B cell (primary cell): ENCODE measurements at regions of chr10 and their contacts with region 1.

Region 1: DNA sequence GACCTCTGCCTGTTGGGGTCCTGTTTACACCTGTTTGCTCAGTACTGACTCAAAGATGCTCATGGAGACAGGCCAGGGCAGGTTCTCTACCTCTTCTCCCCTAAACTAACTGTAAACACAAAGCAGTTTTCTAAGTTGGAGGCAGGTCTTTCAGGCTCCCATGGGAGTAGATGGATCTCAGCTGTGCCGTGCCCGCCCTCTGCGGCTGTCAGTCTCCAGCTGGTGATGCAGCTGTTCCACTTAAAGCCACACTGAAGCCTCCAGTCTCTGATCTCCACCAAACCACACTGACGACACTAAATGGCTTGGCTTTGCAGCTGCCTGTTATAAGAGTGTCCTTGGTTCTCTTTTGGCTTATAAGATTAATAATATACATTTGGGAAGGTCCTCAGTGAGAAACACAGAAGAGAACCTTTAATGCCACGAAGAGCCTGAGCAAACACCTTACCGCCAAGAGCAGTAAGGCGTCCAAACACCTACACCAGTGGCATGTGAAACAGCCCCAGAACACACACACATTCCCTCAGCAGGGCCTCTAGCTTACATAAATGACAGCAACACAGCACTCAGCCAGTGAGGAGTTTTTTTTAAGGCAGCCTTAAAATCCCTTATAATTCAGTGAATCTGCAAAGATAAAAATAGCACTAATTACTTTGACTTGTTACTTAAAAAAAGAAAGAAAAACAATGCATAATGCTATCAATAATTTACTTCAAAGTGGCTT is 60.4 kb upstream of the KCNIP2 start:
- DNase-seq: peak; percentile 85
- ATAC-seq: peak; percentile 87
- H3K4me3 ChIP-seq: no peak overlapping the region
- H3K4me3 Mint-ChIP-seq: peak overlapping the region; percentile 76
- H3K27ac ChIP-seq: peak overlapping the region; percentile 50 to 69
- H3K27ac Mint-ChIP-seq: peak overlapping the region; percentile 89
- H3K4me1 ChIP-seq: peaks cover 72 to 76% of the 10 kb centered on the region in 2 donors
- H3K4me1 Mint-ChIP-seq: peaks cover 74% of the 10 kb centered on the region
- H3K27me3 ChIP-seq: no peaks in the 10 kb centered on the region
- H3K27me3 Mint-ChIP-seq: no peaks in the 10 kb centered on the region
- CTCF ChIP-seq: no peak

Region 2: GRCh38 chr10:101671453-101671852 is 232.5 kb before region 1 on chr10:
- CTCF ChIA-PET with region 1: no interaction called
- POLR2A ChIA-PET with region 1: no interaction called
- intact Hi-C with region 1: no loop called
- DNase-seq: peak; percentile 17
- ATAC-seq: peak; percentile 31
- H3K4me3 ChIP-seq: no peak overlapping the region
- H3K4me3 Mint-ChIP-seq: no peak overlapping the region
- H3K27ac ChIP-seq: peak overlapping the region; percentile 38 to 42
- H3K27ac Mint-ChIP-seq: peak overlapping the region; percentile 57
- H3K4me1 ChIP-seq: peaks cover 9 to 15% of the 10 kb centered on the region in 2 donors
- H3K4me1 Mint-ChIP-seq: peaks cover 15% of the 10 kb centered on the region
- H3K27me3 ChIP-seq: no peaks in the 10 kb centered on the region
- H3K27me3 Mint-ChIP-seq: no peaks in the 10 kb centered on the region
- CTCF ChIP-seq: no peak

Region 3: DNA sequence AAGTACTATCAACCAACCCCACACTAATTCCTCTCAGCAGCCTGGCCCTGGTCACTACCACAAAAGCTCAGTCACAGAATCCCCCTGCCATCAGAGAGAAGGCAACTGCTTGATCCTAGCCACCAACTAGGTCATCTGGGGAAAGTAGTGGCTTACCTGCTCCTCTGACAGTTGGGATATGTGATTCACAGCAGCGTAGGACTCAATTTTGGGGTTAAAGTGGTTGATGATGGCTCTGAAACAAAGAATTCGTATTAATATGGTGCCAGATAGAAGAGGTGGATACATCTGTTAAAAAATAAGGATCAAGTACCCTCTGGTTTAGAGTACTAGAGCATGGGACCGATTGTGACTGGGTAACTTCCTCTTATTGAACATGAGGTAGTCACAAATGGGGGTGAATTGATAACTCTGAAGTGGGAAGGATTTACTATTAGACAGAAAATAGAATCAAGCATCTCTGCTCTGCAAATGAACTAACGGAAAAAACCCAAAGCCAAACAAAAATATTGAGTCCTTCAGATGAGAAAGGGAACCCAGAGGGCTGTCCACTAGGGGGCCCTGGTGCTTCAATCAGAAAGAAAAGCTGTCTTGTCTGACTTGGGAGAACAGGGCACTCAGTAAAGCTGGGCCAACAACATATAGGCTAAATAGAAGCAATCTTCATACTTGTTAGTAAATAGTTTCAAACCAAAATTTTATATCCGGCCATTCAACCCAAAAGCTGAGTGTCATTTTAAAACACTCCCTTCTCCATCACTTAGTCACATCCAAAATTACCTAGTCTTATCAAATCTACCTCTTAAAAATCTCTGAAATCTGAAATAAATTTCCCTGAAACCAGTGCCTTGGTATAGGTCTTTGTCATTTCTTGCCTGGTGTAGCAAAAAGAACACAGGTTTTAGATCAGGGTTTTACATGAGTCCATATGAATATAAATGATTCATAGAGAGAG is 14.5 kb before region 1 on chr10:
- CTCF ChIA-PET with region 1: interaction called, 78 read pairs
- POLR2A ChIA-PET with region 1: interaction called, 3 read pairs
- intact Hi-C with region 1: loop called (anchors 1 kb)
- DNase-seq: peak; percentile 83
- ATAC-seq: peak; percentile 79
- H3K4me3 ChIP-seq: peak overlapping the region in 1 of 5 experiments; percentile 18
- H3K4me3 Mint-ChIP-seq: peak overlapping the region; percentile 1
- H3K27ac ChIP-seq: peak overlapping the region; percentile 17 to 75
- H3K27ac Mint-ChIP-seq: peak overlapping the region; percentile 59
- H3K4me1 ChIP-seq: peaks cover 23 to 43% of the 10 kb centered on the region in 2 donors
- H3K4me1 Mint-ChIP-seq: peaks cover 48% of the 10 kb centered on the region
- H3K27me3 ChIP-seq: no peaks in the 10 kb centered on the region
- H3K27me3 Mint-ChIP-seq: no peaks in the 10 kb centered on the region
- CTCF ChIP-seq: peak; percentile 90

Region 4: DNA sequence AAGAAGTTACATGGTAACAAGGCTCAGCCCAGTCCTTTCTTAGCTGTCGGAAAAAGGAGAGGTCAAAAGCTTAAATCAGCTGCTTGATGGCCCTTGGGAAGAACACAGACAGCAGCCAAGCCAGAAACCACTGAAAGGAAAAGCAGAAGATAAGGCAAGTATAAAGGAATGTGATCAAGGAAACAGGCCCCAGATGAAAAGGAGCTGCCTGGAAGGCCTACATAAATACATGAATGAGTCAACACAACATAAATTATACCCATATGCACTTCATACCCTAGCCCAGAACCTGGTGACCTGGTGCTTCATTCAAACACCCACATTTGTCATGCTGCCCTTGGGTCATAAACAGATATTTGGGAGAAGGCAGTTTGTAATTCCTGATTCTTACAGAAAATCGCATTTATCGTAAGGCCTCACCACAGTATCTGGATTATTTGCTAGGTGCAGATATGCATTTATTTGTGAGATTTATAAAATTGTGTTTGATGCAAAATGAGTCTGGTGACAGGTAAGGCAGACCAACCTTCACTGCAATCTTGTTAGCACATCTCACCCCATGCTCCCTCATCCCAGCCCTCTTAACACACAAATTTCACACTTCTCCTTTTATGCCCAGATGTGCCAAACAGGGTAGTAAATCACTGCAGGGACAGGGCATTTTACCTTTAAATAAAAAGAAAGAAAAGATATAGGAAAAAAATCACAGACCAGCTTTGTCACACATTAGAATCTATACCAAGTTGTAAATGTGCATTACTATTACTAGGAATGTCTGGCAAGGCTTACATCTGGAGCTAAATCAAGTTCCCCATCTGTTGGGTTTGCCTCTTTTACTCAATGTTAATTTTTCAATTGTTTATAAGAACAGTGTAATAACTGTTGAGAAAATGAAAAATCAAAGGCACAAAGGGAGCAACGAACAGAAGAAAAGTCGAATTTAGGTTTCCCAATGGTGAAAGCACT is 34.6 kb after region 1 on chr10:
- CTCF ChIA-PET with region 1: no interaction called
- POLR2A ChIA-PET with region 1: no interaction called
- intact Hi-C with region 1: loop called (anchors 5 kb)
- DNase-seq: peak; percentile 43
- ATAC-seq: no peak
- H3K4me3 ChIP-seq: peak overlapping the region in 1 of 5 experiments; percentile 15
- H3K4me3 Mint-ChIP-seq: no peak overlapping the region
- H3K27ac ChIP-seq: peak overlapping the region in 1 of 2 donors; percentile 49
- H3K27ac Mint-ChIP-seq: no peak overlapping the region
- H3K4me1 ChIP-seq: peaks cover 23 to 31% of the 10 kb centered on the region in 2 donors
- H3K4me1 Mint-ChIP-seq: peaks cover 45% of the 10 kb centered on the region
- H3K27me3 ChIP-seq: no peaks in the 10 kb centered on the region
- H3K27me3 Mint-ChIP-seq: no peaks in the 10 kb centered on the region
- CTCF ChIP-seq: no peak

Region 5: GRCh38 chr10:101952191-101952590 is 48.2 kb after region 1 on chr10:
- CTCF ChIA-PET with region 1: no interaction called
- POLR2A ChIA-PET with region 1: no interaction called
- intact Hi-C with region 1: no loop called
- DNase-seq: no peak
- ATAC-seq: no peak
- H3K4me3 ChIP-seq: no peak overlapping the region
- H3K4me3 Mint-ChIP-seq: no peak overlapping the region
- H3K27ac ChIP-seq: peak overlapping the region in 1 of 2 donors; percentile 47
- H3K27ac Mint-ChIP-seq: no peak overlapping the region
- H3K4me1 ChIP-seq: peaks cover 0 to 3% of the 10 kb centered on the region in 2 donors
- H3K4me1 Mint-ChIP-seq: peaks cover 15% of the 10 kb centered on the region
- H3K27me3 ChIP-seq: no peaks in the 10 kb centered on the region
- H3K27me3 Mint-ChIP-seq: no peaks in the 10 kb centered on the region
- CTCF ChIP-seq: no peak

Region 6: GRCh38 chr10:101974091-101974971 is 70.3 kb after region 1 on chr10:
- CTCF ChIA-PET with region 1: interaction called, 9 read pairs
- POLR2A ChIA-PET with region 1: interaction called, 6 read pairs
- intact Hi-C with region 1: loop called (anchors 2 kb)
- DNase-seq: no peak
- ATAC-seq: no peak
- H3K4me3 ChIP-seq: peak overlapping the region in 1 of 5 experiments; percentile 56
- H3K4me3 Mint-ChIP-seq: peak overlapping the region; percentile 90
- H3K27ac ChIP-seq: peak overlapping the region; percentile 77 to 80
- H3K27ac Mint-ChIP-seq: peak overlapping the region; percentile 97
- H3K4me1 ChIP-seq: peaks cover 54 to 58% of the 10 kb centered on the region in 2 donors
- H3K4me1 Mint-ChIP-seq: peaks cover 60% of the 10 kb centered on the region
- H3K27me3 ChIP-seq: no peaks in the 10 kb centered on the region
- H3K27me3 Mint-ChIP-seq: no peaks in the 10 kb centered on the region
- CTCF ChIP-seq: no peak

Region 7: DNA sequence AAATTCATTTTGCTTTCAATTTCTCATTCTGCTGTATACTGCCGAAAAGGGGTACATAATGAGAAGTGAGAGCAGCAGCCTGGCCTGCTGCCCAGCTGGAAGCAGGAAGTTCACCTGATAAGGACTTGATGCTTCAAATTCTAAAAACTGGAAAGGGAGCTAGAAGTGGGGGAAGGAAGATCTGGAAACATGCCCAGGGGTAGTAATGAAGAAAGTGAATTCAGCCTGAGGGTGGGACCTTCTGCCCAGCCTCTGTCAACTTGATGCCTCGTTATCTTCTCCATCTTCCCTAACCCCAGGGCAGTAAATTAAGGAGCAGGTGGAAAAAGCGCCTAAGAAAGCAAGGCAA is 82.6 kb after region 1 on chr10:
- CTCF ChIA-PET with region 1: interaction called, 7 read pairs
- POLR2A ChIA-PET with region 1: no interaction called
- intact Hi-C with region 1: loop called (anchors 5 kb)
- DNase-seq: peak; percentile 71
- ATAC-seq: peak; percentile 85
- H3K4me3 ChIP-seq: peak overlapping the region in 3 of 5 experiments; percentile 11 to 39 (median 30)
- H3K4me3 Mint-ChIP-seq: peak overlapping the region; percentile 77
- H3K27ac ChIP-seq: peak overlapping the region; percentile 86 to 87
- H3K27ac Mint-ChIP-seq: peak overlapping the region; percentile 86
- H3K4me1 ChIP-seq: peaks cover 25 to 28% of the 10 kb centered on the region in 2 donors
- H3K4me1 Mint-ChIP-seq: peaks cover 23% of the 10 kb centered on the region
- H3K27me3 ChIP-seq: no peaks in the 10 kb centered on the region
- H3K27me3 Mint-ChIP-seq: no peaks in the 10 kb centered on the region
- CTCF ChIP-seq: no peak

Region 8: GRCh38 chr10:102001435-102002068 is 97.6 kb after region 1 on chr10:
- CTCF ChIA-PET with region 1: interaction called, 986 read pairs
- POLR2A ChIA-PET with region 1: no interaction called
- intact Hi-C with region 1: loop called (anchors 2 kb)
- DNase-seq: peak; percentile 84
- ATAC-seq: peak; percentile 85
- H3K4me3 ChIP-seq: peak overlapping the region in 4 of 5 experiments; percentile 2 to 42 (median 38)
- H3K4me3 Mint-ChIP-seq: peak overlapping the region; percentile 85
- H3K27ac ChIP-seq: peak overlapping the region; percentile 76 to 90
- H3K27ac Mint-ChIP-seq: peak overlapping the region; percentile 93
- H3K4me1 ChIP-seq: peaks cover 85 to 86% of the 10 kb centered on the region in 2 donors
- H3K4me1 Mint-ChIP-seq: peaks cover 66% of the 10 kb centered on the region
- H3K27me3 ChIP-seq: no peaks in the 10 kb centered on the region
- H3K27me3 Mint-ChIP-seq: no peaks in the 10 kb centered on the region
- CTCF ChIP-seq: no peak

Region 9: GRCh38 chr10:102055647-102056419 is 151.8 kb after region 1 on chr10 and contains the start of gene ARMH3:
- CTCF ChIA-PET with region 1: interaction called, 4 read pairs
- POLR2A ChIA-PET with region 1: no interaction called
- intact Hi-C with region 1: loop called (anchors 5 kb)
- DNase-seq: peak; percentile 94
- ATAC-seq: peak; percentile 91
- H3K4me3 ChIP-seq: peak within 1 kb of the TSS; percentile 76 to 99 (median 93)
- H3K4me3 Mint-ChIP-seq: peak within 1 kb of the TSS; percentile 99
- H3K27ac ChIP-seq: peak within 1 kb of the TSS; percentile 75 to 80
- H3K27ac Mint-ChIP-seq: peak within 1 kb of the TSS; percentile 98
- H3K4me1 ChIP-seq: peaks cover 15 to 26% of the 10 kb centered on the region in 2 donors
- H3K4me1 Mint-ChIP-seq: peaks cover 36% of the 10 kb centered on the region
- H3K27me3 ChIP-seq: no peaks in the 10 kb centered on the region
- H3K27me3 Mint-ChIP-seq: no peaks in the 10 kb centered on the region
- CTCF ChIP-seq: no peak
- total RNA-seq, gene ARMH3: 36.2 and 40.7 TPM in 2 replicates